IMR-90 (cell line): ENCODE measurements at regions of chr5 and their contacts with region 1.

Region 1: GRCh38 chr5:118236108-118236849 is 752.1 kb downstream of the DTWD2 start:
- DNase-seq: no peak
- ATAC-seq: no peak
- H3K4me3 ChIP-seq: no peak overlapping the region
- H3K27ac ChIP-seq: no peak overlapping the region
- H3K4me1 ChIP-seq: no peaks in the 10 kb centered on the region
- H3K27me3 ChIP-seq: no peaks in the 10 kb centered on the region
- CTCF ChIP-seq: no peak
- POLR2A ChIP-seq: no peak
- RAD21 ChIP-seq: no peak

Region 2: GRCh38 chr5:116702776-116703175 is 1533.5 kb before region 1 on chr5:
- CTCF ChIA-PET with region 1: no interaction called
- POLR2A ChIA-PET with region 1: no interaction called
- dilution Hi-C with region 1: no loop called
- in situ Hi-C with region 1: no loop called
- intact Hi-C with region 1: loop called (anchors 5 kb)
- DNase-seq: no peak
- ATAC-seq: no peak
- H3K4me3 ChIP-seq: no peak overlapping the region
- H3K27ac ChIP-seq: no peak overlapping the region
- H3K4me1 ChIP-seq: no peaks in the 10 kb centered on the region
- H3K27me3 ChIP-seq: no peaks in the 10 kb centered on the region
- CTCF ChIP-seq: no peak
- POLR2A ChIP-seq: no peak
- RAD21 ChIP-seq: no peak